ENCODE measurements at regions of chr10 and their contacts with region 1.

Region 1: GRCh38 chr10:112183329-112184051 is at the start of gene GPAM:
- DNase-seq: peak; percentile 87
- H3K4me3 Mint-ChIP-seq: peak within 1 kb of the TSS; percentile 98
- H3K27ac Mint-ChIP-seq: peak within 1 kb of the TSS; percentile 94
- H3K4me1 Mint-ChIP-seq: peaks cover 19% of the 10 kb centered on the region
- H3K27me3 Mint-ChIP-seq: no peaks in the 10 kb centered on the region
- CTCF ChIP-seq: no peak
- total RNA-seq, gene GPAM: 19.8 and 20.4 TPM in 2 replicates

Region 2: DNA sequence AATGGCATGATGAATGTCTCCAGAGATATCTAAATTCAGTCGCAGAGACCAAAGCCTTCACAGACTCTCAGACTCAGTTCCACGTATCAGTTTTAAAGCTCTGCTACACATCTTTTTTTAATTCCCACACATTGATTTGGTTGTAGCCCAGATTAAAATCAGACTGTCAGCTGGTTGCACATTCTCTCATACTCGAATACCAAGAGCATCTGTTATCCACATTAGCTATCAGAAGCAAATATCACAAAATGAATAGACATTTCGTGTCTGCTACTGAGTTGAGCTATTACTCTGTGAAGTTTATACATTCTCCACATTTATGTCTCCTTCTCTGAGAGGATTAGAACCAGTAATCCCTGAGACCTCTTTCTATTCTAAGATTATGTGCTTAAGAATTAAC is 229.1 kb before region 1 on chr10:
- CTCF ChIA-PET with region 1: no interaction called
- POLR2A ChIA-PET with region 1: no interaction called
- intact Hi-C with region 1: no loop called
- DNase-seq: no peak
- H3K4me3 Mint-ChIP-seq: no peak overlapping the region
- H3K27ac Mint-ChIP-seq: no peak overlapping the region
- H3K4me1 Mint-ChIP-seq: no peaks in the 10 kb centered on the region
- H3K27me3 Mint-ChIP-seq: peaks cover 10% of the 10 kb centered on the region
- CTCF ChIP-seq: no peak

Region 3: DNA sequence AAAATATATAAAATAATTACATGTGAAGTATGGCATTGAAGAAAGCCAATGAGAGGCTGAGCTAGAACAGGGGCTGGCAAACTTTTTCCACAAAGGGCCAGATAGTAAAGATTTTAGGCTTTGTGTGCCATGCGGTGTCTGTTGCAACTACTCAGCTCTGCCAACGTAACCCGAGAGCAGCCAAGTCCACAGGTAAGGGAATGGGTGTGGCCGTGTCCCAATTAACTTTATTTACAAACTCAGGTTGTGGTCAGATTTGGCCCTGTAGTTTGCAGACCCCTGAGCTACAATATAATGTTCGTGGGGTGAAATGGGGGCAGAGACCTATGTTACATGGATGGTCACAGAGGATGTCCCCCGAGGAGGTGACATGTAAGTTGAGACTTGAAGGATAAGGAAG is 53.5 kb before region 1 on chr10:
- CTCF ChIA-PET with region 1: no interaction called
- POLR2A ChIA-PET with region 1: no interaction called
- intact Hi-C with region 1: no loop called
- DNase-seq: peak; percentile 20
- H3K4me3 Mint-ChIP-seq: no peak overlapping the region
- H3K27ac Mint-ChIP-seq: no peak overlapping the region
- H3K4me1 Mint-ChIP-seq: no peaks in the 10 kb centered on the region
- H3K27me3 Mint-ChIP-seq: no peaks in the 10 kb centered on the region
- CTCF ChIP-seq: no peak

Region 4: DNA sequence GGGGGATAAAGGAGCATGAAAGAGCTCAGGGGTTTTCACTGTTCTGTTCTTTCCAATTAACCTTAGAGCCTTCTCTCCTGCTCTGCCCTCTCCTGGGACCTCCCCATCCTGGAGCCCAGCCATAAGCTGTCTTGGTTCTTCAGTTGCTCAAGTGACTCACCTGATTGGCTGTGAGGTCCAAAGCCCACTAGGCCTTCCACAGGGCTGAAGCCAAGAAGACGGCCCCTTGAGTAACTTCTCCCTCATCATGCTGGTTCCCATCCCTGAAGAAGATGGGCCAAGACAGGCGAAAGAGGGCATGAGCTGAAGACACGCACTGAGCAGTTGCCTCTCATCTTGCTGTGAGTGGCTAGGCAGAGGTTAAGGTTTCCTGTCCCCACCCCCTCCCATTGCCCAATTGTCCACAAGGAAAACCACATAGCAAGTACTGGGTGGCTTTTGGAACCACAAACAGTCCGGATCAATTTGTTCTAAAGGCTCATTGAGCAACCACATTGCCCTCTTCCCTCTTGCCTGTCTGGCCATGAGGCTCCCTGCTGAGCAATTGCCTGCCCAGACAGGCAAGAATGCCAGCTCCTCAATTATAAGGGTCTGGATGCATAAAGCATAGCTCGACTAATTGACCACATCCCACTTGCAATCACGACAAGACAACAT is 44.0 kb after region 1 on chr10:
- CTCF ChIA-PET with region 1: interaction called, 4 read pairs
- POLR2A ChIA-PET with region 1: interaction called, 38 read pairs
- intact Hi-C with region 1: loop called (anchors 5 kb)
- DNase-seq: peak; percentile 98
- H3K4me3 Mint-ChIP-seq: peak overlapping the region; percentile 68
- H3K27ac Mint-ChIP-seq: peak overlapping the region; percentile 53
- H3K4me1 Mint-ChIP-seq: peaks cover 77% of the 10 kb centered on the region
- H3K27me3 Mint-ChIP-seq: no peaks in the 10 kb centered on the region
- CTCF ChIP-seq: no peak

Region 5: DNA sequence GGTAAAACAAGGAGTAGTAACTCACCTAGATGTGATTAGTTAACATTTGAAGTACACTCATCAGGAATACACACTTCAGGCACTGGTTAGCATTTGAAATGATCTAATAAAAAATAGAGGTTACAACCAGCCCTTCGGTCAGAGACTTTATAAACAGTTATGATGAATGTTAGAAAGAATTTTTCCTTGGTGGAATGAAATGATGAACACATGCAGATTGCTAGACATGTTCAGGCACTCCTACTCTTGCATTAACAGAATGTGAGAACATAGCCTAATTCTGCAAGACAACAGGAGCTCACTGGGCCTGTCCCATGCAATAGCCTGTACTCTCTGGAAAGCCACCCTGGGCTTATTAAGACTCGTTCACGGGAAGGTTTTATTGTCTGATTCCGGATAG is 52.4 kb after region 1 on chr10:
- CTCF ChIA-PET with region 1: interaction called, 3 read pairs
- POLR2A ChIA-PET with region 1: interaction called, 11 read pairs
- intact Hi-C with region 1: no loop called
- DNase-seq: no peak
- H3K4me3 Mint-ChIP-seq: no peak overlapping the region
- H3K27ac Mint-ChIP-seq: peak overlapping the region; percentile 81
- H3K4me1 Mint-ChIP-seq: peaks cover 37% of the 10 kb centered on the region
- H3K27me3 Mint-ChIP-seq: no peaks in the 10 kb centered on the region
- CTCF ChIP-seq: no peak

Region 6: GRCh38 chr10:112307358-112308124 is 124.1 kb after region 1 on chr10:
- CTCF ChIA-PET with region 1: interaction called, 65 read pairs
- POLR2A ChIA-PET with region 1: interaction called, 13 read pairs
- intact Hi-C with region 1: loop called (anchors 1 kb)
- DNase-seq: peak; percentile 74
- H3K4me3 Mint-ChIP-seq: no peak overlapping the region
- H3K27ac Mint-ChIP-seq: no peak overlapping the region
- H3K4me1 Mint-ChIP-seq: peaks cover 14% of the 10 kb centered on the region
- H3K27me3 Mint-ChIP-seq: no peaks in the 10 kb centered on the region
- CTCF ChIP-seq: peak; percentile 73

Region 7: GRCh38 chr10:112446855-112447711 is 263.6 kb after region 1 on chr10 and contains the starts of genes VTI1A and ZDHHC6:
- CTCF ChIA-PET with region 1: interaction called, 4 read pairs
- POLR2A ChIA-PET with region 1: interaction called, 11 read pairs
- intact Hi-C with region 1: no loop called
- DNase-seq: peak; percentile 85
- H3K4me3 Mint-ChIP-seq: peak within 1 kb of the TSS; percentile 95
- H3K27ac Mint-ChIP-seq: peak within 1 kb of the TSS; percentile 88
- H3K4me1 Mint-ChIP-seq: peaks cover 16% of the 10 kb centered on the region
- H3K27me3 Mint-ChIP-seq: no peaks in the 10 kb centered on the region
- CTCF ChIP-seq: no peak
- total RNA-seq, gene VTI1A: 44.4 and 58.1 TPM in 2 replicates
- total RNA-seq, gene ZDHHC6: 25.9 and 26.3 TPM in 2 replicates